Right cardiac atrium (tissue), 5 donors: ENCODE measurements at regions of chr1 and their contacts with region 1.

Region 1: GRCh38 chr1:205273551-205273982 is 45.8 kb downstream of the TMCC2 start:
- DNase-seq: peak; percentile 79 to 93 (median 90)
- ATAC-seq: peak; percentile 71 to 76
- H3K4me3 ChIP-seq: no peak overlapping the region
- H3K27ac ChIP-seq: no peak overlapping the region
- H3K4me1 ChIP-seq: peaks cover 7% of the 10 kb centered on the region
- H3K27me3 ChIP-seq: no peaks in the 10 kb centered on the region

Region 2: GRCh38 chr1:205325334-205325884 is 51.8 kb after region 1 on chr1:
- intact Hi-C with region 1: loop called (anchors 1 to 2 kb)
- DNase-seq: peak in 1 of 3 donors; percentile 38
- ATAC-seq: peak; percentile 10 to 20
- H3K4me3 ChIP-seq: no peak overlapping the region
- H3K27ac ChIP-seq: no peak overlapping the region
- H3K4me1 ChIP-seq: no peaks in the 10 kb centered on the region
- H3K27me3 ChIP-seq: no peaks in the 10 kb centered on the region